Uterus (tissue), 4 donors: ENCODE measurements at regions of chr10 and their contacts with region 1.

Region 1: GRCh38 chr10:91797874-91798648 is at the start of gene TNKS2:
- DNase-seq: peak; percentile 91 to 93
- H3K4me3 ChIP-seq: peak within 1 kb of the TSS; percentile 46 to 91
- H3K27ac ChIP-seq: peak within 1 kb of the TSS; percentile 96 to 97
- H3K4me1 ChIP-seq: peaks cover 0 to 6% of the 10 kb centered on the region in 2 donors
- H3K27me3 ChIP-seq: no peaks in the 10 kb centered on the region
- CTCF ChIP-seq: peak in 1 of 4 experiments; percentile 10
- POLR2A ChIP-seq: peak; percentile 95
- total RNA-seq, gene TNKS2: 33.8 to 102 (median 51.9) TPM

Region 2: DNA sequence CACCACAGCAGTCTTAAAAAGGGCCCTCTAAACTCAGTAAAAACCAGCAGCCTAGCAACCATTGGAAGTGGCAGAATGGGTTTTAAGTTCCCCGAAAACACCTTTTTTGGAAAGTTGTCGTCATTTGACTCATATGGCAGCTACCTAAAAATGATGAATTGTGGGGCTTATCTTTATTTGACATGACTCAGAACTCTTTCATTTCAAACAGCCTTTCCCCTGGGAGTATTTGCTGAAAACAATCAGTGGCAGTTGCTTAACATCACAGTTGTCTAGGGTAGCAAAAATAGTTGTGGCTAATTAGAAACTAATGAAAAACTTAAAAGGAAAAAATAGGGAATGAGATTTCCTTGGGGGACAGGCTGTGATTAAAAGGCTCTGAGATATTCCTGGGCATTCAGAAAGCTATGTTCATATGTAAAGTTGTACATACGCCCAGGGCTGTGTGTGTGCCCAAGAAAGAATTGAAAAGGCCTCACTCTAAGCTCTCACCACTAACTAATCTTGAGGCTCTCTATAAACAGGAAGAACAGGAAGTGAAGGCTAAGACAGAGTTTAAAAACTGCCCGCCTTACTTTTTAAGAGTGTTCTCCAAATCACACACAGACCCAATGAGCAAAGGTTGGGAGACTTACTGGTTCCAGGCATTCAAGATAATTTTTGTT is 469.6 kb before region 1 on chr10:
- intact Hi-C with region 1: no loop called
- DNase-seq: no peak
- H3K4me3 ChIP-seq: no peak overlapping the region
- H3K27ac ChIP-seq: no peak overlapping the region
- H3K4me1 ChIP-seq: no peaks in the 10 kb centered on the region
- H3K27me3 ChIP-seq: no peaks in the 10 kb centered on the region
- CTCF ChIP-seq: no peak
- POLR2A ChIP-seq: no peak

Region 3: GRCh38 chr10:91643700-91644099 is 154.4 kb before region 1 on chr10:
- intact Hi-C with region 1: loop called (anchors 5 kb)
- DNase-seq: no peak
- H3K4me3 ChIP-seq: no peak overlapping the region
- H3K27ac ChIP-seq: no peak overlapping the region
- H3K4me1 ChIP-seq: no peaks in the 10 kb centered on the region
- H3K27me3 ChIP-seq: no peaks in the 10 kb centered on the region
- CTCF ChIP-seq: no peak
- POLR2A ChIP-seq: no peak